ENCODE measurements at regions of chr1 and their contacts with region 1.

Region 1: DNA sequence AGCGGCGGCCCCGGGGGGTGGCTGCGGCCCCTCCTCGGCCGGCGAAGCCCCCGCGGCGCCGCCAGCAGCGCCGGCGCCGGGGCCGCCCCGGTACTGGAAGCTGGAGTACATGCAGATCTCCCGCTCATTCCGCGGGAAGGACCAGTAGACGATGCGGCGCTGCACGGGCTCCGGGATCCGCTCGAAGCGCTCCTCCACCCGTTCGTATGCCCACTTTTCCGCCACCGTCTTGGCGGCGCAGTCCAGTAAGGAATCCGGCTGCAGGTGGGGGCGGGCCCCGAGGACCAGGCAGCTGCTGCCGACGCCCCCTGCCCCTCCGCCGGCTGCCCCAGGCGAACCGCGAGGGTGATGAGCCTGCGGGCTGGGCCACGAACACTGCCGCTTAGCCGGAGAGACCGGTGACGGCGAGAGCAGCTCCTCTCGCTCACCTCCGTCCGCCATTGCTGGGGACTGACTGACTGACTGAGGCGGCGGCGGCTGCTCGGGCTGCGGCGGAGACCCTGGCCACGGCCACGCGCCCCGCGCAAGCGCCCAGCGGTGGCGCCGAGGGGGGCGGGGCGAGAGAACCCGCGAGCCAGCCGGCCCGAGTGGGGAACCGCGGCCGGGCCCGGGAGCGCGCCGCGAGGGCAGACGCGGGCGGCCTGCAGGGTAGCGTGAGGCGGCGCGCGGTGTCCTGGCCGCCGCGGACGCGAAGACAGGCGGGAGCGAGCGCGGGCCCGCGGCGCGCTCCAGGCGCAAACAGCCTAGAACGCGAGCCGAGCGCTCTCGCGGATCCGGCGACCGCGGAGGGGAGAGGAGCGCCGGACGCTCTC is at the start of gene ZSWIM5:
- DNase-seq: peak; percentile 70 to 82 (median 74)
- H3K4me3 ChIP-seq: peak within 1 kb of the TSS; percentile 75 to 98 (median 90)
- H3K27ac ChIP-seq: peak within 1 kb of the TSS; percentile 72 to 95 (median 83)
- H3K4me1 ChIP-seq: peaks cover 0 to 29% of the 10 kb centered on the region in 2 donors
- H3K27me3 ChIP-seq: no peaks in the 10 kb centered on the region
- CTCF ChIP-seq: no peak
- POLR2A ChIP-seq: peak; percentile 70 to 84
- total RNA-seq, gene ZSWIM5: 13.3 to 34.0 (median 20.1) TPM

Region 2: GRCh38 chr1:45018599-45019230 is 187.4 kb before region 1 on chr1:
- intact Hi-C with region 1: loop called in 1 of 2 experiments (anchors 5 kb)
- DNase-seq: peak; percentile 56 to 91 (median 73)
- H3K4me3 ChIP-seq: no peak overlapping the region
- H3K27ac ChIP-seq: peak overlapping the region in 1 of 5 donors; percentile 14
- H3K4me1 ChIP-seq: peaks cover 5 to 16% of the 10 kb centered on the region in 2 donors
- H3K27me3 ChIP-seq: no peaks in the 10 kb centered on the region
- CTCF ChIP-seq: peak; percentile 52 to 87 (median 75)
- POLR2A ChIP-seq: no peak